ENCODE measurements at regions of chr6 and their contacts with region 1.

Region 1: DNA sequence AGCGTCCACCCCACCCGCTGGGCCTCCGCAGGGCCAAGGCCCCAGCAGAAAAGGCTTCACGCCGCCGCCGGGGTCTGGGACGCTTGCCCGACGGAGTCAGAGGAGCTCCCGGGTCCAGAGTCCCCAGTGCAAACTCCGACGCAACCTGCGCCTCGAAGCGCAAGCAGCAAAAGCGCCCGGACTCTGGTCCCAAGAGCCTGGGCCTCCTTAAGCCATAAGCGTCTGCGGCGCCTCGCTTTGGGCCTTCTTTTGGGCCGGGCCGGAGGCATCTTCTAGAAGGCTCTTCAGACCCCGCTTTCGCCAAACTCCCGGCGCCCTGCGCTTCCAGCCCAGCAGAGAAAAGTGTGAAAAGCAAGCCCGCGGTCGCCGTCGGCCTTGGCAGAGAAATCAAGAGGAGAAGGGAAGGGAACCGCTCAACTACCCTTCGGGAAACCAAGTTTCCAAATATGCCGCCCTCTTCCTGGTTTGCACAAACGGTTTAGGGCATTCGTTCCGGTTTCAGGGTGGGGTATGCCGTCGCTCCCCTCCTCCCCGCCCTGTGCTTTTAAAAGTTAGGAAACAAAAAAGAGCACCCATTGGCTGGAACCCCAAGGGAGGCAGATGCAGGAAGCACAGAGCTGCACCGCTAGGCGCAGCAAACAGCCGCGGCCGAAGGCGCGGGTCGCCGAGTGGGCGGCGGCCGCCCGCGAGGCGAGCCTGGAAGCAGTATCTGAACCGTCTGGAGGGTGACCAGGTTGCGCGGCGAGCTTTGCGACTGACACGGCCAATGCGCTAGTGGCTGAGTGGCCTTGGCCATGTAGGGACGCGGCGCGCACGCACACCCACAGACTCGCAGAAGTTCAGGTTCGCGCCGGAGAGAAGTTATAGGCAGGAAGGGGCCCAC is 1.2 kb downstream of the TBX18 start:
- DNase-seq: peak; percentile 45

Region 2: DNA sequence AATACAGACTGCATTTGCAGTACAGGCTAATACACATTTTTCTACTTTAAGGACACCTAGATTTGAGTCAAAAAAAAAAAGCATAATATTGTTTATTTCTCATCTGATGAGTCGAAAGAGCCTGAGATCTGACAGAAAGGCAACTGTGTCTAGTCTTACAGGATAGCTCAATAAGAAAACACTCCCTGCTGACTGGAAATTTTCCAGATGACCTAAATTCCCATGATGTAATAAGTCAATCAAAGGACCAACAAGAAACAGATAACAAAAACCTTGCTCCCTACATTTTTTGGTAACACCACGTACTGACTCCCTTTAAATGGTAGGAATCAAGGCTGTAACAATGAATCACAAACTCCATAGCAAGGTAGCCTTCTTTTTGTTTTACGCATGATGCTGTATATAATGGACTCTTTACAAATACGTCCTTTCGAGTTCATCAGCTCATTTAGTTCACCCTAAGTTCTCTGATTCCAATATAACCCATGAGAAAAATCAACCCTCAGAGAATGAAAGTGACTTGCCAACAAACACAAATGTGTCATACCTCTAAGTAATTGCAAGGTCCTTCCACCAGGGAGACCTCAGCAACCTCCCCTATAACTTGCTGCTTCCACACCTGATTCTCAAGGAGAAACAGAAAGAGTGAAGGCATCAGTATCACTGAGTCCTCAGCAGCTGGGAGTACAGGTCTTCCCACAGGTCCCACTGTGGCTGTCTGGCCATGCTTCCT is 11.0 kb before region 1 on chr6:
- CTCF ChIA-PET with region 1: interaction called, 3 read pairs
- POLR2A ChIA-PET with region 1: interaction called, 14 read pairs
- DNase-seq: no peak

Region 3: GRCh38 chr6:84774157-84774984 is 11.1 kb after region 1 on chr6:
- CTCF ChIA-PET with region 1: interaction called, 5 read pairs
- POLR2A ChIA-PET with region 1: interaction called, 18 read pairs
- DNase-seq: no peak